ENCODE measurements at regions of chr14 and their contacts with region 1.

Region 1: GRCh38 chr14:95725685-95726336 is 11.9 kb upstream of the TCL1A start:
- DNase-seq: peak; percentile 78
- ATAC-seq: peak; percentile 91
- H3K4me3 ChIP-seq: peak overlapping the region in 4 of 5 experiments; percentile 3 to 45 (median 32)
- H3K4me3 Mint-ChIP-seq: peak overlapping the region; percentile 68
- H3K27ac ChIP-seq: peak overlapping the region; percentile 59 to 74
- H3K27ac Mint-ChIP-seq: peak overlapping the region; percentile 90
- H3K4me1 ChIP-seq: peaks cover 66 to 69% of the 10 kb centered on the region in 2 donors
- H3K4me1 Mint-ChIP-seq: peaks cover 67% of the 10 kb centered on the region
- H3K27me3 ChIP-seq: no peaks in the 10 kb centered on the region
- H3K27me3 Mint-ChIP-seq: peaks cover 30% of the 10 kb centered on the region
- CTCF ChIP-seq: no peak

Region 2: GRCh38 chr14:95697764-95698163 is 28.0 kb before region 1 on chr14:
- CTCF ChIA-PET with region 1: interaction called, 4 read pairs
- POLR2A ChIA-PET with region 1: interaction called, 8 read pairs
- intact Hi-C with region 1: loop called (anchors 5 kb)
- DNase-seq: peak; percentile 76
- ATAC-seq: peak; percentile 64
- H3K4me3 ChIP-seq: peak overlapping the region in 3 of 5 experiments; percentile 9 to 56 (median 16)
- H3K4me3 Mint-ChIP-seq: peak overlapping the region; percentile 81
- H3K27ac ChIP-seq: peak overlapping the region; percentile 87 to 94
- H3K27ac Mint-ChIP-seq: peak overlapping the region; percentile 95
- H3K4me1 ChIP-seq: peaks cover 100% of the 10 kb centered on the region in 2 donors
- H3K4me1 Mint-ChIP-seq: peaks cover 83% of the 10 kb centered on the region
- H3K27me3 ChIP-seq: no peaks in the 10 kb centered on the region
- H3K27me3 Mint-ChIP-seq: peaks cover 34% of the 10 kb centered on the region
- CTCF ChIP-seq: peak; percentile 19

Region 3: DNA sequence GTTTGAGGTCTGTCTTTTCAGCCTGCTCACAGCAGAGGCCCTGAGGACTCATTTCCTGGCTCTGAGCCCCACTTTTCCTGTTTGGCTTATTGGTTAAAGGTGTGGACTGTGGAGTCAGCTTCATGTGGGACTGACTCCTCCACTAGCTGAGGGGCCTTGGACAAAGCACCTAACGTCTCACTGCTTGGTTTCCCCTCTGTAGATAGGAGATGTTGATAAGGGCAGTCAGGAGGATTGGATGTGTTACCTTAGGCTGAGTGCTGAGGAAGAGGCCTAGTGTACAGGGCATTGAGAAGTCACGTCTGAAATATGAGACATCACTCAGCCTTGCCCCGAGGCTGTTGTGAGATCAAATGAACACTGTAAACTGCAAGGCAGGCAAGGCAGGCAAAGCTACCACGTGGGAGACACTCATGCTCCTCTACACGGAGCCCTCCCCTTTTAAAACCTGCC is 15.3 kb after region 1 on chr14:
- CTCF ChIA-PET with region 1: no interaction called
- POLR2A ChIA-PET with region 1: no interaction called
- intact Hi-C with region 1: no loop called
- DNase-seq: no peak
- ATAC-seq: no peak
- H3K4me3 ChIP-seq: no peak overlapping the region
- H3K4me3 Mint-ChIP-seq: no peak overlapping the region
- H3K27ac ChIP-seq: no peak overlapping the region
- H3K27ac Mint-ChIP-seq: peak overlapping the region; percentile 60
- H3K4me1 ChIP-seq: peaks cover 27 to 34% of the 10 kb centered on the region in 2 donors
- H3K4me1 Mint-ChIP-seq: peaks cover 33% of the 10 kb centered on the region
- H3K27me3 ChIP-seq: no peaks in the 10 kb centered on the region
- H3K27me3 Mint-ChIP-seq: peaks cover 4% of the 10 kb centered on the region
- CTCF ChIP-seq: no peak

Region 4: DNA sequence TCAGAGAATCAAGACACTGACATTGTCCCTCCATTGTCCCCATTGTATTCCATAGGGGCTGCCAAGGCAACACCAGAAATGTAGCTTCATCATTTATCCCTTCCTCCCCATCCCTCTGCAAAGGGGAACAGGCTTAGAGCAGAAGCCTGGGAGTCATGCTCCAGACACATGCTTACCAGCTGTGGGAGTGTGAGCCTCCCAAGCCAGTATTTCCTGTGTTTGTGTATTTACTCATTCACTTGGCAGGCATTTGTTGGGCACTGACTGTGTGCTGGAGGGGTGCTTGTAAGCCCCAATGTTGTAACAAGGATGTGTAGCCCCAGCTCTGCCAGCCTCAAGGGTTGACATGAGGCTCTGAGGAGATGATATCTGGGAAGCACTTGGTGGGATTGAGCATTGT is 34.1 kb after region 1 on chr14:
- CTCF ChIA-PET with region 1: no interaction called
- POLR2A ChIA-PET with region 1: no interaction called
- intact Hi-C with region 1: no loop called
- DNase-seq: no peak
- ATAC-seq: no peak
- H3K4me3 ChIP-seq: no peak overlapping the region
- H3K4me3 Mint-ChIP-seq: no peak overlapping the region
- H3K27ac ChIP-seq: no peak overlapping the region
- H3K27ac Mint-ChIP-seq: no peak overlapping the region
- H3K4me1 ChIP-seq: no peaks in the 10 kb centered on the region
- H3K4me1 Mint-ChIP-seq: no peaks in the 10 kb centered on the region
- H3K27me3 ChIP-seq: no peaks in the 10 kb centered on the region
- H3K27me3 Mint-ChIP-seq: peaks cover 18% of the 10 kb centered on the region
- CTCF ChIP-seq: no peak

Region 5: GRCh38 chr14:95835331-95835730 is 109.5 kb after region 1 on chr14:
- CTCF ChIA-PET with region 1: no interaction called
- POLR2A ChIA-PET with region 1: no interaction called
- intact Hi-C with region 1: no loop called
- DNase-seq: no peak
- ATAC-seq: no peak
- H3K4me3 ChIP-seq: no peak overlapping the region
- H3K4me3 Mint-ChIP-seq: no peak overlapping the region
- H3K27ac ChIP-seq: no peak overlapping the region
- H3K27ac Mint-ChIP-seq: no peak overlapping the region
- H3K4me1 ChIP-seq: peaks cover 7 to 8% of the 10 kb centered on the region in 2 donors
- H3K4me1 Mint-ChIP-seq: peaks cover 8% of the 10 kb centered on the region
- H3K27me3 ChIP-seq: no peaks in the 10 kb centered on the region
- H3K27me3 Mint-ChIP-seq: peaks cover 7% of the 10 kb centered on the region
- CTCF ChIP-seq: no peak

Measured in B cell (primary cell).